MCF 10A (cell line): ENCODE measurements at regions of chr17 and their contacts with region 1.

Region 1: DNA sequence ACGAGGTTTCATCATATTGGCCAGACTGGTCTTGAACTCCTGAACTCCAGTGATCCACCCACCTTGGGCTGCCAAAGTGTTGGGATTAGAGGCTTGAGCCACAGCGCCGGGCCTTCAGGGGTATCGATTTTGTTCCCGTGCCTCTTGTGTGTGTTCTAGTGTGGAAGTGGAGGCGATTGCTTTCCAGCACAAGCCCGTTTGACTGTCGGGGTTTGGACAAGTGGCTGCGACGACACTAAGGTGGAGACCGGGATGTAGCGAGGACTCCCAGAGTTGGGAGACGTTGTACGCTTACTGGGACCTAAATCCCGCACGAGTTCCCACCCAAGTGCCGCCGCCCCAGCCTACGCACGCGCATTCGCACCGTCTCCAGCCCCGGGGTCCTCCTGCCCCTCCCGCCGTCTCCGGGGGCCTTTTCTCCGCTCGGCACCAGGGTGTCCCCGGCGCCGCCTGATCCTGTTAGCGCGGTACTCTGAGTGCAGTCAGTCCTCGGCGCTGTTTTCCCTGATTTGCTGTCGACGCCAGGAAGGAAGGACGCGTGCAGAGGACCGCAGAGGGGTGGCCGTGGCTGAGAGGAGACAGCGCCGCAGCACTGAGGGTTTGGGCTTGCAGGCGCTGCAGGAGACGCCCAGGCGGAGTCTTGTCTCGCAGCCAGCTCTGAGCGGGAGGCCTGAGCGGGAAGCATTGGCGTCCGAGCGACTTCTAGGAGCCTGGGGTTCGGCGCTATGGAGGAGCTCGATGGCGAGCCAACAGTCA is at the start of gene NUP85:
- DNase-seq: peak; percentile 94
- H3K4me3 Mint-ChIP-seq: peak within 1 kb of the TSS; percentile 78
- H3K27ac Mint-ChIP-seq: peak within 1 kb of the TSS; percentile 98
- H3K4me1 Mint-ChIP-seq: peaks cover 11% of the 10 kb centered on the region
- H3K27me3 Mint-ChIP-seq: no peaks in the 10 kb centered on the region
- CTCF ChIP-seq: no peak
- total RNA-seq, gene NUP85: 42.3 and 49.2 TPM in 2 replicates

Region 2: GRCh38 chr17:75012346-75013091 is 192.7 kb before region 1 on chr17 and contains the start of gene MRPL58:
- CTCF ChIA-PET with region 1: no interaction called
- POLR2A ChIA-PET with region 1: interaction called, 10 read pairs
- intact Hi-C with region 1: no loop called
- DNase-seq: peak; percentile 80
- H3K4me3 Mint-ChIP-seq: peak within 1 kb of the TSS; percentile 96
- H3K27ac Mint-ChIP-seq: peak within 1 kb of the TSS; percentile 77
- H3K4me1 Mint-ChIP-seq: peaks cover 22% of the 10 kb centered on the region
- H3K27me3 Mint-ChIP-seq: no peaks in the 10 kb centered on the region
- CTCF ChIP-seq: peak; percentile 49
- total RNA-seq, gene MRPL58: 56.5 and 71.2 TPM in 2 replicates

Region 3: DNA sequence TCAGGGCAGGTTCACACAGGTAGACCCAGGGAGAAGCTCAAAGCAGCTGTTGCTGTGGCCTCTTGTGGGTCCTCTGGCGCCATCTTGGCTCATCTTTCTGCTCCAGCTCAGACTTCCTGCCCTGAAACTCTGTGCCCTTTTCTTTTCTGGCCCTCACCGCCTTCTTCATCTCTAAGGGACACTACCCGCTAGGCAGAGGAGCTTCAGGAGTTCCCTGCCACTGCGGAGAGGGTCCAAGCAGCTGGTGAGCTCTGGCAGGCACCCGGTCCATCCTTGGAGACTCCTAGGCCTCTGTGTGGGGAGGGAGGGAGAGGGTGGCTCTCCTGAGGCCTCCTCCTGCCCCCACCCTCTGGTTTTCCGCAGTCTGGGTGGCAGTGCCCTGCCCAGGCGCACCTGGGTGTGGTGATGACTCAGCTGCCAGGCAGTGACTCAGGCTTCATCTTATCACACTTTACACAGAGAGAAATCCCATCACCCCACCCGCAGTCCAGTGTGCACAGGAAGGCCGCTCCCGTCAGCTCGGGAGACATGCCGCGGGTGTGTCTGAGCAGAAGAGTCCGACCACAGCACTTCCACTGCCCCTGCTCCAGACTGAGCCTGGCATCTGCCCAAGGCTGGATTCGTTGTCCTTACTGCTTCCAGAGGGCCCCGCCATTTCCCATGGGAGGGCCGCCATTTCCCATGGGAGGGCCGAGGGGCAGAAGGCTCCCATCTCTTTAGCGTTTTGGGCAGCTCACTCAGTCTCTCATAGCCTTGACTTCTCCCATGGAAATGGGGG is 81.0 kb before region 1 on chr17:
- CTCF ChIA-PET with region 1: interaction called, 7 read pairs
- POLR2A ChIA-PET with region 1: interaction called, 20 read pairs
- intact Hi-C with region 1: no loop called
- DNase-seq: peak; percentile 98
- H3K4me3 Mint-ChIP-seq: peak overlapping the region; percentile 66
- H3K27ac Mint-ChIP-seq: peak overlapping the region; percentile 95
- H3K4me1 Mint-ChIP-seq: peaks cover 18% of the 10 kb centered on the region
- H3K27me3 Mint-ChIP-seq: no peaks in the 10 kb centered on the region
- CTCF ChIP-seq: no peak

Region 4: DNA sequence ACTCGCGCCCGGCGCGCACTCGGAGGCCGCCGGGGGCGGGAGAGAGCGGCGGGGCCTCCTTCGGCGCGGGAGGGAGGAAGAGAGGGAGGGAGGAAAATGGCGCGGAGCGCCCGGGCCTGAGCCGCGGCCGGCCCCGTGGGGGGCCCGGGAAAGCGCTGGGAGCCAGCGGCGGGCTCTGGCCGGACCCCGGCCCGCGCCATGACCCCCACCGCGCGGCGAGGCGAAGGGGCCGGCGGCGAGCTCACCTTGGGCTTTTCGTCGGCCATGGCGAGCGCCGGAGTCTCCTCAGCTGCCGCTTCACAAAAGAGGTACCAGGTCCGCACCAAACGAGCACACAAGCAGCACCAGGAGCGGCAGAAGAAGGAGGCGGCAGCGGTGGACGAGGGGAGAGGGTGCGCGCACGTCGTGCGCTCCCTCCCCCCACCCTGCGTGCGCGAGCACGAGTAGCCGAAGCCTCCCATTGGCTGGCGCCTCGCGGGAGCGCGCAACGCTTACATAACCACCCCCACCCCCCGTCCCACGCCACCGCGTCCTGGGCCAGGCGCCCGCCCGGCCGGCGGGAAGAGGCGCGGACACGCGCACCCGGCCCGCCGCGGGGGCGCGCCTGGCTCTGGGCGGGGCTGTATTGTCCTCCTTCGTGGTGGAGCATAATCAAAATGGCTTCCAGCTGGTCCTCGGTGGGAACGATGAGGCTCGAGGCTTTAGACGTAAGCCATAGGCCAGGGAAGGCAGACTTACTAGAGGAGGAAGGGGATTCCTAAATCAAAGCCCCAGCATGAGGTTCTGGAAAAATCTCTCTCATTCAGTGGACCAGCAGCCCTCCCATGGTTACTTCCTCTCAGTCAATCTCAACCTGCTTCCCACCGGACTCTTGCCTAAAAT is 22.4 kb before region 1 on chr17 and contains the start of gene SUMO2:
- CTCF ChIA-PET with region 1: interaction called, 6 read pairs
- POLR2A ChIA-PET with region 1: interaction called, 15 read pairs
- intact Hi-C with region 1: no loop called
- DNase-seq: peak; percentile 92
- H3K4me3 Mint-ChIP-seq: peak within 1 kb of the TSS; percentile 80
- H3K27ac Mint-ChIP-seq: peak within 1 kb of the TSS; percentile 77
- H3K4me1 Mint-ChIP-seq: peaks cover 20% of the 10 kb centered on the region
- H3K27me3 Mint-ChIP-seq: no peaks in the 10 kb centered on the region
- CTCF ChIP-seq: peak; percentile 20
- total RNA-seq, gene SUMO2: 186 and 194 TPM in 2 replicates

Region 5: GRCh38 chr17:75271233-75271954 is 66.2 kb after region 1 on chr17:
- CTCF ChIA-PET with region 1: interaction called, 6 read pairs
- POLR2A ChIA-PET with region 1: interaction called, 20 read pairs
- intact Hi-C with region 1: no loop called
- DNase-seq: peak; percentile 74
- H3K4me3 Mint-ChIP-seq: peak overlapping the region; percentile 74
- H3K27ac Mint-ChIP-seq: peak overlapping the region; percentile 39
- H3K4me1 Mint-ChIP-seq: peaks cover 23% of the 10 kb centered on the region
- H3K27me3 Mint-ChIP-seq: no peaks in the 10 kb centered on the region
- CTCF ChIP-seq: peak; percentile 67

Region 6: GRCh38 chr17:75524953-75525719 is 319.9 kb after region 1 on chr17 and contains the start of gene LLGL2:
- CTCF ChIA-PET with region 1: no interaction called
- POLR2A ChIA-PET with region 1: no interaction called
- intact Hi-C with region 1: no loop called
- DNase-seq: peak; percentile 84
- H3K4me3 Mint-ChIP-seq: peak within 1 kb of the TSS; percentile 71
- H3K27ac Mint-ChIP-seq: no peak within 1 kb of the TSS
- H3K4me1 Mint-ChIP-seq: peaks cover 7% of the 10 kb centered on the region
- H3K27me3 Mint-ChIP-seq: no peaks in the 10 kb centered on the region
- CTCF ChIP-seq: peak; percentile 27
- total RNA-seq, gene LLGL2: 19.8 and 21.2 TPM in 2 replicates